ENCODE measurements at regions of chr4 and their contacts with region 1.

Region 1: GRCh38 chr4:129550281-129550785 is 454.4 kb downstream of the C4orf33 start:
- DNase-seq: no peak
- ATAC-seq: no peak
- H3K4me3 ChIP-seq: no peak overlapping the region
- H3K4me3 Mint-ChIP-seq: no peak overlapping the region
- H3K27ac ChIP-seq: no peak overlapping the region
- H3K27ac Mint-ChIP-seq: no peak overlapping the region
- H3K4me1 ChIP-seq: no peaks in the 10 kb centered on the region
- H3K4me1 Mint-ChIP-seq: no peaks in the 10 kb centered on the region
- H3K27me3 ChIP-seq: no peaks in the 10 kb centered on the region
- H3K27me3 Mint-ChIP-seq: no peaks in the 10 kb centered on the region
- CTCF ChIP-seq: no peak

Region 2: DNA sequence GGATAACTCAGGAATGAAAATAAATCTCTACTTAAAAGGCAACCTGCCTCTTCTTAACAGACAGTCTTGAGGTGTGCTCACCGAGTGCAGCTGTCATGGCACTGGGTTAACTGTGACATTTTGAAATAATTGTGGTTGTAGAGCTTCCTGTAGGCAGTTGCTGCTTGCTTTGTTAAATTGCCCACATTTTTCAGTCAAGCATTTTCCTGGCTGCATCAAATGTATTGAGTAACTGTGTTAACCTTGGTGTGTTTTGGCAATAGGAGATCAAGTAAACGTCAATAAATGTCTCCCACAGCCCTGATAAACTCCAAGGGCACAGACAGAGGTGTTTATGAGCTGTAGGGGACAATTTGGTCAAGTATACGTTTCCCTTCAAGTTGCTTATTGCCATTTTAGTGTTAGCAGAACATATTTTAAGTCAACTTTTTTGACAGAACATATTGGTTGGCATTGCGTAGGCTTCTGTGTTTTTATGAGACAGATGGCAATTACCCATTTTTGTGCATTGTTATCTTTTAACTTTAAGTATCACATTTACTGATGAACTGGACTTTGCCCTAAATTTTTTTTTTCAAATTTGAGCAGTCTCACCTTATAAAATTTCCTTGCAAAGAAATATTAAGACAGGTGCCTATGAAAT is 73.0 kb after region 1 on chr4:
- CTCF ChIA-PET with region 1: no interaction called
- POLR2A ChIA-PET with region 1: no interaction called
- intact Hi-C with region 1: loop called in 1 of 2 experiments (anchors 10 kb)
- DNase-seq: peak in 1 of 14 experiments; percentile 3
- ATAC-seq: peak; percentile 46
- H3K4me3 ChIP-seq: no peak overlapping the region
- H3K4me3 Mint-ChIP-seq: no peak overlapping the region
- H3K27ac ChIP-seq: no peak overlapping the region
- H3K27ac Mint-ChIP-seq: peak overlapping the region; percentile 58
- H3K4me1 ChIP-seq: no peaks in the 10 kb centered on the region
- H3K4me1 Mint-ChIP-seq: no peaks in the 10 kb centered on the region
- H3K27me3 ChIP-seq: no peaks in the 10 kb centered on the region
- H3K27me3 Mint-ChIP-seq: no peaks in the 10 kb centered on the region
- CTCF ChIP-seq: no peak